ENCODE measurements at regions of chr7 and their contacts with region 1.

Region 1: GRCh38 chr7:16071246-16071857 is 350.0 kb downstream of the CRPPA start:
- DNase-seq: no peak
- ATAC-seq: peak; percentile 52

Region 2: DNA sequence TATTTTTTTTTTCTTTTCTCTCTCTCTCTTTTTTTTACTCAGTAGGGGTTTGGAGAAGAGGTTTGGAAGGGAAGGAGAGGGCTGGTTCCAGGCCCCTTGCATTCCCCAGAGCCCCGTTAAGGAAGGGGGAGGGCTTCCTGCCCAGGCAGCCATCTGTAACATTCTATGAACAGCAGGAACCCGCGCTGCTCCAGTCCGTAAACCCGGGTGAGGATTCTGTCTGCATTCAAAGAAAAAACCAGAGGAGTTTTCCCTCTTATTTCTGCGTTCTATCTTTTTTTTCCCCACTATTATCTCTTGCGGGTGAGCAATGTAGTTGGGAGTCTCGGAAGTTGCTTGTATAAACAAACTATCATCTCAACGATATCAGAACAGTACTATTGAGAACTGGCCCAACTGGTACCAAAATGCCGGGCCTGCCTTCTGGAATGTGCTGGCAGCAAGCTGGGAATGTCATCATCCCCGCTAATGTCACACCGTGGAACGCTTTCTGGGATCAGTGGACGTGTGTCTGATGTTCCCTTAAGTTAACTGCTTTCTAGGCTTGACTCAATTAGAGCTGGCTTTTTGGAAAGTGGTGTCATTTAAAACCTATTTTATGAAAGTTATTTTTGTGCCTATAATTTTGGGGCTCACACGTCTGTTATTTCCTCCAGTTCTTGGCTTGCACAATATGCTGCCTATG is 231.8 kb before region 1 on chr7:
- intact Hi-C with region 1: loop called (anchors 5 kb)
- DNase-seq: peak; percentile 82
- ATAC-seq: peak; percentile 99

Region 3: DNA sequence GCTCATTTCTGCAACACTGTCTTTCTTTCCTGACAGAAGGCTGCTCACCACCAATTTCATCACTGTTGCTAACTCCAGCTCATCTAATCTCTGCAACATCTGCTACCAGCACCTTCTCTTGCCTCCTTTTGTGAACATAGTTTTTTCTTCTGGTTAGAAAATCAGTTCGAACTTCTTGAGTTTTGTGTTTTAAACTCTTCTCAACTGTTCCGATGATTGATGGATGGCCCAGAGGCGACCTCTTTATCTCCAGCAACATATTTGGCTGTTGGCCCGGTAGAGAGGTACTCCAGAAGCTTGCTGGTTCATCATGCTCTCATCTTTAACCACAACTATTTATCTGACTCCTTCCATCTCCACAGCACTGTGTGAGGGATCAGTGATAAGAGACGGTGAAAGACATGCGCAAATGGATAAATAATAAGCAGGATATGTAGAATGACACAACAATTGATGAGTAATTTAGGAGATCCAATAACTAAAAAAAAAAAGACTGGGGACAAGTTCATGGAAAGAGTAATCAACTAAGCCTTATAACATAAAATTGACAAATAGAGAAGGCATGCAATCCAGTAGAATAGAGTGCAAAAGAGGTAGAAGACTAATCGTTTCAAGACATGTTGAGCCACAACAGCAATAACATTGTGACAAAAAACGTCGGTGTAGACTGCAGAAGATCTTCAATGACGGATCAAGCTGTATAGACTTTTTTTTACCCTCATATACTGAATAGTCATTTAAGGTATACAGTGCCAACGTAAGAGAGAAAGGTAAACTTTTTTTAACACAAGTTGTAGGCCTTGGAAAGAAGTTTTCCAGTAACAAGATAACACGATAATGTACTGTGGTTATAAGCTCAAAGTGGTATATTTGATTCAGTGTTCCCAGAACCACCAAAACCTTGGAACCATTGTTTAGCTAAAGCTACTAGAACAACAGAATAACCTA is 197.7 kb after region 1 on chr7:
- intact Hi-C with region 1: no loop called
- DNase-seq: no peak
- ATAC-seq: peak; percentile 57